GM12878 (cell line): ENCODE measurements at regions of chr19 and their contacts with region 1.

Region 1: GRCh38 chr19:49929611-49930482 is 543 bp upstream of the NUP62 start:
- DNase-seq: peak; percentile 90
- ATAC-seq: peak; percentile 83
- H3K4me3 ChIP-seq: peak overlapping the region; percentile 92
- H3K27ac ChIP-seq: peak overlapping the region; percentile 94
- H3K4me1 ChIP-seq: peaks cover 15% of the 10 kb centered on the region
- H3K27me3 ChIP-seq: no peaks in the 10 kb centered on the region
- CTCF ChIP-seq: no peak
- EP300 ChIP-seq: no peak
- POLR2A ChIP-seq: peak; percentile 94
- RAD21 ChIP-seq: no peak

Region 2: GRCh38 chr19:49889687-49890348 is 40.0 kb before region 1 on chr19:
- CTCF ChIA-PET with region 1: interaction called, 10 read pairs
- POLR2A ChIA-PET with region 1: interaction called, 113 read pairs
- RAD21 ChIA-PET with region 1: interaction called, 66 read pairs
- SMC1A ChIA-PET with region 1: interaction called, 78 read pairs
- in situ Hi-C with region 1: no loop called
- intact Hi-C with region 1: no loop called
- DNase-seq: no peak
- ATAC-seq: peak; percentile 31
- H3K4me3 ChIP-seq: peak overlapping the region; percentile 53; the same call in 1 of the 2 replicates
- H3K27ac ChIP-seq: peak overlapping the region; percentile 18; the same call in 1 of the 2 replicates
- H3K4me1 ChIP-seq: peaks cover 25% of the 10 kb centered on the region
- H3K27me3 ChIP-seq: no peaks in the 10 kb centered on the region
- CTCF ChIP-seq: peak; percentile 64 to 79 (median 71)
- EP300 ChIP-seq: no peak
- POLR2A ChIP-seq: no peak
- RAD21 ChIP-seq: peak; percentile 40

Region 3: GRCh38 chr19:49896863-49897621 is 32.8 kb before region 1 on chr19 and contains the start of gene IL4I1:
- CTCF ChIA-PET with region 1: interaction called, 10 read pairs
- POLR2A ChIA-PET with region 1: interaction called, 113 read pairs
- RAD21 ChIA-PET with region 1: interaction called, 66 read pairs
- SMC1A ChIA-PET with region 1: interaction called, 78 read pairs
- in situ Hi-C with region 1: no loop called
- intact Hi-C with region 1: loop called (anchors 2 kb)
- DNase-seq: peak; percentile 96
- ATAC-seq: peak; percentile 57
- H3K4me3 ChIP-seq: peak within 1 kb of the TSS; percentile 77
- H3K27ac ChIP-seq: peak within 1 kb of the TSS; percentile 91
- H3K4me1 ChIP-seq: peaks cover 40% of the 10 kb centered on the region
- H3K27me3 ChIP-seq: no peaks in the 10 kb centered on the region
- CTCF ChIP-seq: no peak
- EP300 ChIP-seq: peak; percentile 42 to 81; a peak in 3 of 4 replicates
- POLR2A ChIP-seq: peak; percentile 69
- RAD21 ChIP-seq: no peak
- polyA plus RNA-seq, gene IL4I1: 0.62 to 1.00 TPM

Region 4: DNA sequence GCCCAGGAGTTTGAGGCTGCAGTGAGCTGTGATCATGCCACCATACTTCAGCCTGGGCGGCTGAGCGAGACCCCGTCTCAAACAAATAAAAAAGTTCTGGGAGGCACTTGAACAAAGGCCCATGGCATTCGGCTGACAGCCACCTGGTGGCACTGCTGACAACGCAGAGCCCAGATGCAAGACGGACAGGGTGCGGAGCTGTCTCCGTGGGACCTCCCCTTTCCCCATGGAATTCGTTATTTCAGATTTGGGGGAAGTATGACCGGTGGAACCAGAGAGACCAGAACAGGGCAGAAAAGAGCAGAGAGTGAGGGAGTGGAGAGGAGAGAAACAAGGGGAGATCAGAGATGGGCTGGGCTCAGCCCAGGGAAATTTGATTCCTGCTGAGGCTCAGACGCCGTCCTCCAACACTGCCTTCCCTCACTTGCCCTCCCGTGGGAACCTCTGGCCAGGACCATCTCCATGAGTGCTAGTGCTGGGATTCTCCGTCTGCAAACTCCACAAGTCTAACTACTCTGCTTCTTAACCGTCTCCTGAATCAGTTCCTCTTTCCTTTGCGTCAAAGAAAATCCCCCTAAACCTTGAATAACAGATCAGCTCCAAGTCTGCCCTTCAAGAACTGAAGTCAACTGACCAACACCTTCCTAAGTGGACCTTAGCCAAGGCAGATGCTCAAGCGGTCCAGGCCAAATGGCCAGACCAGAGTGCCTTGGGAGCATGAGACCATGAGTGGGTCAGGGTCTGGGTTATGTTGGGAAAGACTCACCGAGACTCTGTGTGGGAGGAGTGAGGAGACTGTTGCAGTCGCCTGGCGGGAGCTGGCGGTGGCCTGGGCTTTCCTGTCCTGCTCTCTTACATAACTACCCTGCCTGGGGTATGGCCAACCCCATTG is 12.8 kb before region 1 on chr19:
- CTCF ChIA-PET with region 1: interaction called, 33 read pairs
- POLR2A ChIA-PET with region 1: interaction called, 50 read pairs
- RAD21 ChIA-PET with region 1: interaction called, 40 read pairs
- SMC1A ChIA-PET with region 1: interaction called, 48 read pairs
- in situ Hi-C with region 1: no loop called
- intact Hi-C with region 1: no loop called
- DNase-seq: no peak
- ATAC-seq: peak; percentile 45
- H3K4me3 ChIP-seq: no peak overlapping the region
- H3K27ac ChIP-seq: peak overlapping the region; percentile 67
- H3K4me1 ChIP-seq: peaks cover 43% of the 10 kb centered on the region
- H3K27me3 ChIP-seq: no peaks in the 10 kb centered on the region
- CTCF ChIP-seq: peak; percentile 17 to 46 (median 28); a peak in 2 of 6 replicates
- EP300 ChIP-seq: no peak
- POLR2A ChIP-seq: no peak
- RAD21 ChIP-seq: no peak

Region 5: GRCh38 chr19:50051964-50052363 is 122.1 kb after region 1 on chr19:
- CTCF ChIA-PET with region 1: no interaction called
- POLR2A ChIA-PET with region 1: no interaction called
- RAD21 ChIA-PET with region 1: no interaction called
- SMC1A ChIA-PET with region 1: no interaction called
- in situ Hi-C with region 1: no loop called
- intact Hi-C with region 1: no loop called
- DNase-seq: no peak
- ATAC-seq: no peak
- H3K4me3 ChIP-seq: no peak overlapping the region
- H3K27ac ChIP-seq: no peak overlapping the region
- H3K4me1 ChIP-seq: peaks cover 7% of the 10 kb centered on the region; the same call in 1 of the 2 replicates
- H3K27me3 ChIP-seq: no peaks in the 10 kb centered on the region
- CTCF ChIP-seq: no peak
- EP300 ChIP-seq: no peak
- POLR2A ChIP-seq: no peak
- RAD21 ChIP-seq: no peak